GM12878 (cell line): ENCODE measurements at regions of chr14 and their contacts with region 1.

Region 1: DNA sequence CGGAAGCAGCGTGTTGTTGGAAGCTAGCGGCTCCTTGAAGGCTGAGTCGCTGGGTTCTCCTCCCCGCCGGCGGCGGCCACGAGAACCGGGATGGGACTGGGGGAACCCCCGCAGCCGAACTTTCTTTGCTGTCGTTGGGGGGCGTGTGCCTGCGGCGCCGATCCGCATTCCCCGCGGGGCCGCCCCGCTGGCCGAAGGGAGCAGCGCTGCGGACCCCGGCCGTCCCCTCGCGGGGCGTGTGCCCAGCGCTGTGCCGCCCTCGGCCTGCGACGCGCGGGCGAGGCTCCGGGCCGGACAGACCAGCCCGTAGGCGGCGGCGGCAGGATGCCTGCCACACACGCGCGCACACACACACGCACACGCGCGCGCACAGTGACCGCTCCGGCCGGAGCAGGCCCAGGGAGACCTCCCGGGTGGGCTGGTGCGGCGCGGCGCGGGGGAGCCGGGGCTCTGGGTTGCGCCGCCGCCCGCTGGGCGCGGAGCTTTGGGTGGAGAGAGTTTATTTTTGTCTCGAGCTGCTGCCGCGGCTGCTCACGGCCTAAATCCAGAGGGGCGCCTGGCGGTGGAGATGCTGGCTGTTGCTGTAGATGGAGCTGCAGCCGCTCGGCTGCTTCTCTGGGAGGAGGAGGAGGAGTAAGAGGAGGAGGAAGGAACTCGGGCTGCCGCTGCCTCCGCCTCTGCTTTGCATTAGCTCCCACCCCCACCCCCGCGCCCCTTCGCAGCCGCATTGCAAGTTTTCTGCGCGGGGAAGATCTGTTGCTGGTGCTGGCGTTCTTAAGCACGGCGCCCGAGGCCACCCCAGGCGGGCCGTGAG is at the start of gene SAMD4A:
- DNase-seq: no peak
- ATAC-seq: peak; percentile 46
- H3K4me3 ChIP-seq: peak within 1 kb of the TSS; percentile 79
- H3K27ac ChIP-seq: no peak within 1 kb of the TSS
- H3K4me1 ChIP-seq: peaks cover 12% of the 10 kb centered on the region; the same call in 1 of the 2 replicates
- H3K27me3 ChIP-seq: peaks cover 0 to 3% of the 10 kb centered on the region in 2 experiments; a peak in 1 of 4 replicates
- CTCF ChIP-seq: peak in 1 of 3 experiments; percentile 34; a peak in 2 of 6 replicates
- EP300 ChIP-seq: no peak
- POLR2A ChIP-seq: no peak
- RAD21 ChIP-seq: 0 out of 2 replicates have a peak, but pooled peaks have one; percentile 14
- polyA plus RNA-seq, gene SAMD4A: 0.29 to 0.33 TPM

Region 2: GRCh38 chr14:54532111-54533012 is 34.3 kb before region 1 on chr14:
- CTCF ChIA-PET with region 1: interaction called, 3 read pairs
- POLR2A ChIA-PET with region 1: no interaction called
- RAD21 ChIA-PET with region 1: interaction called, 3 read pairs
- SMC1A ChIA-PET with region 1: interaction called, 11 read pairs
- in situ Hi-C with region 1: no loop called
- intact Hi-C with region 1: no loop called
- DNase-seq: peak; percentile 53
- ATAC-seq: peak; percentile 98
- H3K4me3 ChIP-seq: peak overlapping the region; percentile 45; the same call in 1 of the 2 replicates
- H3K27ac ChIP-seq: peak overlapping the region; percentile 79
- H3K4me1 ChIP-seq: peaks cover 7% of the 10 kb centered on the region; the same call in 1 of the 2 replicates
- H3K27me3 ChIP-seq: no peaks in the 10 kb centered on the region
- CTCF ChIP-seq: no peak
- EP300 ChIP-seq: no peak
- POLR2A ChIP-seq: 0 out of 2 replicates have a peak, but pooled peaks have one; percentile 18
- RAD21 ChIP-seq: no peak

Region 3: GRCh38 chr14:54610051-54610977 is 43.7 kb after region 1 on chr14:
- CTCF ChIA-PET with region 1: no interaction called
- POLR2A ChIA-PET with region 1: no interaction called
- RAD21 ChIA-PET with region 1: no interaction called
- SMC1A ChIA-PET with region 1: no interaction called
- in situ Hi-C with region 1: no loop called
- intact Hi-C with region 1: no loop called
- DNase-seq: no peak
- ATAC-seq: no peak
- H3K4me3 ChIP-seq: no peak overlapping the region
- H3K27ac ChIP-seq: no peak overlapping the region
- H3K4me1 ChIP-seq: no peaks in the 10 kb centered on the region
- H3K27me3 ChIP-seq: no peaks in the 10 kb centered on the region
- CTCF ChIP-seq: no peak
- EP300 ChIP-seq: no peak
- POLR2A ChIP-seq: no peak
- RAD21 ChIP-seq: no peak

Region 4: DNA sequence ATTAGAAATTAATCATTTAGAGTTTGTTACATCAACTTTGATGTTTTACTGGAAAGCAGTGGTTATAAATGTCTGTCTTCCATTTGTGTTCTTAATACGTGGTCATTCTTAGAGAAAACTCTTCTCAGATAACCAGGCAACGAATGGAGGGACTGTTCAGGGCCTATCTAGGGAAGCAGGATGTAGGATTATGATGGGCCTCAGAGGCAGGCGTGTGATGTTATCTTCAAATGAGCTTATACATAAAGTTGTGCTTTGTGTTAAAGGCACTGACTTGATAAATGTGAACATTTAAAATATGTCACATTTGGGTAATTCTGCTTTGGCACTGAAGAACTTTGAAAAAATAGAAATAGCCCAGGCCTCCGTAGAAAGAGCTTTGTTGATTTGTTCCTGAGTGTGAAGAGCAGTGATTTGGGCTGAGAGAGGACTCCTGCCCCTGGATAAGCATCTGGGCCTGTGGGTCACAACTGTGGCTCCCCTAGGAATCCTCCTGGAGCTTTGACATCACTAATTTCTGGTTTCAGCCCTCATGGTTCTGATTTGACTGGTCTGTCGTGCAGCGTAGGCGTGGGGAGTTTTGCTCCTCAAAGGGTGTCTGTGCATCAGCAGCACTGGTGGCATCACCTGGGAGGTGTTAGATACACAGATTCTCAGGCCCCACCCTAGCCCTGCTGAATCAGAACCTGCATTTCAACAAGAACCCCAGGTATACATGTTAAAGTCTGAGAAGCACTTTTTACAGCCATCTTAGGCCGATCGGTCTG is 55.8 kb after region 1 on chr14:
- CTCF ChIA-PET with region 1: interaction called, 17 read pairs
- POLR2A ChIA-PET with region 1: interaction called, 5 read pairs
- RAD21 ChIA-PET with region 1: interaction called, 6 read pairs
- SMC1A ChIA-PET with region 1: interaction called, 3 read pairs
- in situ Hi-C with region 1: no loop called
- intact Hi-C with region 1: loop called (anchors 2 kb)
- DNase-seq: peak; percentile 61
- ATAC-seq: peak; percentile 95
- H3K4me3 ChIP-seq: no peak overlapping the region
- H3K27ac ChIP-seq: peak overlapping the region; percentile 33; the same call in 1 of the 2 replicates
- H3K4me1 ChIP-seq: peaks cover 14% of the 10 kb centered on the region
- H3K27me3 ChIP-seq: no peaks in the 10 kb centered on the region
- CTCF ChIP-seq: no peak
- EP300 ChIP-seq: peak; percentile 90 to 96; a peak in 3 of 4 replicates
- POLR2A ChIP-seq: no peak
- RAD21 ChIP-seq: no peak

Region 5: GRCh38 chr14:54642801-54643697 is 76.4 kb after region 1 on chr14:
- CTCF ChIA-PET with region 1: interaction called, 115 read pairs
- POLR2A ChIA-PET with region 1: interaction called, 4 read pairs
- RAD21 ChIA-PET with region 1: interaction called, 15 read pairs
- SMC1A ChIA-PET with region 1: interaction called, 38 read pairs
- in situ Hi-C with region 1: loop called (anchors 5 kb)
- intact Hi-C with region 1: loop called (anchors 1 kb)
- DNase-seq: no peak
- ATAC-seq: peak; percentile 76
- H3K4me3 ChIP-seq: no peak overlapping the region
- H3K27ac ChIP-seq: no peak overlapping the region
- H3K4me1 ChIP-seq: no peaks in the 10 kb centered on the region
- H3K27me3 ChIP-seq: 0 out of 4 replicates have a peak, but pooled peaks cover 0 to 3% of the 10 kb centered on the region in 2 experiments
- CTCF ChIP-seq: peak; percentile 29 to 58 (median 35); a peak in 5 of 6 replicates
- EP300 ChIP-seq: no peak
- POLR2A ChIP-seq: no peak
- RAD21 ChIP-seq: peak; percentile 56

Region 6: GRCh38 chr14:54691525-54692283 is 125.1 kb after region 1 on chr14:
- CTCF ChIA-PET with region 1: interaction called, 42 read pairs
- POLR2A ChIA-PET with region 1: interaction called, 5 read pairs
- RAD21 ChIA-PET with region 1: interaction called, 30 read pairs
- SMC1A ChIA-PET with region 1: interaction called, 24 read pairs
- in situ Hi-C with region 1: no loop called
- intact Hi-C with region 1: loop called (anchors 1 kb)
- DNase-seq: no peak
- ATAC-seq: peak; percentile 91
- H3K4me3 ChIP-seq: no peak overlapping the region
- H3K27ac ChIP-seq: no peak overlapping the region
- H3K4me1 ChIP-seq: no peaks in the 10 kb centered on the region
- H3K27me3 ChIP-seq: no peaks in the 10 kb centered on the region
- CTCF ChIP-seq: peak; percentile 71 to 89 (median 78)
- EP300 ChIP-seq: no peak
- POLR2A ChIP-seq: no peak
- RAD21 ChIP-seq: peak; percentile 76

Region 7: DNA sequence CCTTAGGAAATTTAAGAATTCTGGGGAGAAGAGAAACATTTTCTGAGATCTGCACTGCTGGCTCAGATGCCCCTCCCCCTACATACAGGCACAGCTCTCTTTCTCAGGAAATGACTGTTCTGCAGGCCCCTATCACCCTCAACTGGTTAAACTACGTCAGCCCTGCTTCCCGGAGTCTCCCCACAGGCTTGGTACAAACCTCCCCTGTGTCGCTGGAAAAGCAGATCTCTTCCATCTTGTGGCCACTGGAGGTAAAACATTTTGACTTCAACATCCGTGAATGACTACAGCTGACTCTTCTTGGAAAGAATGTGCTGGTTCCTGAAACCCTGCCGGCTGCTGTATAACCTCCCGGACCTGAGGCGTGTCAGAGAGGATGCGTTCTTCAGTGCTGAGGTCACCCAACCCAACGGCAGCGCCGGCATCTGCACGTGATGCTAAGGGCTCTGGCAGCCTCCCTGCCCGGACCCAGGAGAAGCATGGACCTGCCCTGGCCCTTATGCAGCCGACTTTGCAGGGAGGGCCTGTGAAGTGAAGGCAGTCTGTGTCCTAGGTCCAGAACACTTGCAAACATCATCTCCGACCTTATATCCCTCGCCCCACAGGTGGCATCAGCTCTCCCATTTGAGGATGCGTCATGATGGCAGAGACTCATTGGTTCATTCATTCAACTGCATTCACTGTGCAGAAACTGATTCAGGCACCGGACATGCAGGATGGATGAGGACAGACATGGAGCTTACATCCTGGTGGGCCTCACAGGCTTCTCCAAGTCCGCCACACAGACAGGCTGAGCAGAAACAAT is 206.8 kb after region 1 on chr14:
- CTCF ChIA-PET with region 1: interaction called, 160 read pairs
- POLR2A ChIA-PET with region 1: interaction called, 3 read pairs
- RAD21 ChIA-PET with region 1: interaction called, 130 read pairs
- SMC1A ChIA-PET with region 1: interaction called, 87 read pairs
- in situ Hi-C with region 1: no loop called
- intact Hi-C with region 1: loop called (anchors 1 kb)
- DNase-seq: peak; percentile 35
- ATAC-seq: peak; percentile 77
- H3K4me3 ChIP-seq: no peak overlapping the region
- H3K27ac ChIP-seq: no peak overlapping the region
- H3K4me1 ChIP-seq: peaks cover 30% of the 10 kb centered on the region
- H3K27me3 ChIP-seq: no peaks in the 10 kb centered on the region; a peak in 1 of 4 replicates
- CTCF ChIP-seq: peak; percentile 33 to 43 (median 37); a peak in 5 of 6 replicates
- EP300 ChIP-seq: no peak; a peak in 1 of 4 replicates
- POLR2A ChIP-seq: no peak
- RAD21 ChIP-seq: peak; percentile 48

Region 8: DNA sequence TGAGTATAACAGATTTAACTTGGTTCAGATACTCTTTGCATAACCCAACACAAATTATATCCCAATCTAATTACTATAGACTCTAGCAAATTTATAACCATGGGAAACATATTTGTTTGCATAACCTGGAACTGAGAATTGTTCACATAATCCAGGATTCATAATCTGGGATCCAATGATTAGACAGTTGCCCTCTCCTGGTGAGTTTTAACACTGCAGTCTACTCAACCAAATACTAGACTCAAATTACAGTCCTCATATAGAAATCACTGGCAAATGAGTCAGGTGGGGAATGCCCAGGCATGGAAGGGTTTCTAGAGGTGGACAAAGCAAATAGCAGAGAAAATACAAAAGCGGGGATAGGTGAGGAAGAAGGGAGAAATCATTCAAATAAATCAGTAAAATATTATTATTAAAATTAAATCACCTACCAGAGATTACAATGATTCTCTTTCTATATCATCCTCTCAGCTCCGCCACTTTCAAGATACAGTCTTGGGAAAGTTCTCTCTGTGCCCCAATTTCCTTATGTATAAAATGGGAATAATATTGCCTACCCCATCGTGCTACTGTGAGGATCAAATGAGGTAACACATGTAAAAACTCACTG is 326.6 kb after region 1 on chr14:
- CTCF ChIA-PET with region 1: interaction called, 3 read pairs
- POLR2A ChIA-PET with region 1: no interaction called
- RAD21 ChIA-PET with region 1: no interaction called
- SMC1A ChIA-PET with region 1: interaction called, 4 read pairs
- in situ Hi-C with region 1: no loop called
- intact Hi-C with region 1: loop called (anchors 5 kb)
- DNase-seq: no peak
- ATAC-seq: peak; percentile 68
- H3K4me3 ChIP-seq: no peak overlapping the region
- H3K27ac ChIP-seq: no peak overlapping the region
- H3K4me1 ChIP-seq: peaks cover 25% of the 10 kb centered on the region
- H3K27me3 ChIP-seq: no peaks in the 10 kb centered on the region
- CTCF ChIP-seq: peak; percentile 55 to 78 (median 67)
- EP300 ChIP-seq: no peak
- POLR2A ChIP-seq: no peak
- RAD21 ChIP-seq: peak; percentile 53